Activated B cell treated with CpG ODN at 0.5 μM for 24 hours (primary cell): ENCODE measurements at regions of chr6 and their contacts with region 1.

Region 1: GRCh38 chr6:106181664-106182418 is 95.7 kb downstream of the PRDM1 start:
- DNase-seq: no peak
- ATAC-seq: peak; percentile 41
- H3K4me3 Mint-ChIP-seq: no peak overlapping the region
- H3K27ac Mint-ChIP-seq: peak overlapping the region; percentile 78
- H3K4me1 Mint-ChIP-seq: peaks cover 30% of the 10 kb centered on the region
- H3K27me3 Mint-ChIP-seq: no peaks in the 10 kb centered on the region
- CTCF ChIP-seq: no peak

Region 2: GRCh38 chr6:106097411-106098231 is 84.2 kb before region 1 on chr6:
- CTCF ChIA-PET with region 1: no interaction called
- POLR2A ChIA-PET with region 1: interaction called, 10 read pairs
- intact Hi-C with region 1: no loop called
- DNase-seq: no peak
- ATAC-seq: peak; percentile 74
- H3K4me3 Mint-ChIP-seq: peak overlapping the region; percentile 89
- H3K27ac Mint-ChIP-seq: peak overlapping the region; percentile 94
- H3K4me1 Mint-ChIP-seq: peaks cover 84% of the 10 kb centered on the region
- H3K27me3 Mint-ChIP-seq: no peaks in the 10 kb centered on the region
- CTCF ChIP-seq: no peak

Region 3: GRCh38 chr6:106112433-106112832 is 69.4 kb before region 1 on chr6:
- CTCF ChIA-PET with region 1: no interaction called
- POLR2A ChIA-PET with region 1: no interaction called
- intact Hi-C with region 1: no loop called
- DNase-seq: no peak
- ATAC-seq: no peak
- H3K4me3 Mint-ChIP-seq: no peak overlapping the region
- H3K27ac Mint-ChIP-seq: no peak overlapping the region
- H3K4me1 Mint-ChIP-seq: peaks cover 28% of the 10 kb centered on the region
- H3K27me3 Mint-ChIP-seq: no peaks in the 10 kb centered on the region
- CTCF ChIP-seq: no peak

Region 4: DNA sequence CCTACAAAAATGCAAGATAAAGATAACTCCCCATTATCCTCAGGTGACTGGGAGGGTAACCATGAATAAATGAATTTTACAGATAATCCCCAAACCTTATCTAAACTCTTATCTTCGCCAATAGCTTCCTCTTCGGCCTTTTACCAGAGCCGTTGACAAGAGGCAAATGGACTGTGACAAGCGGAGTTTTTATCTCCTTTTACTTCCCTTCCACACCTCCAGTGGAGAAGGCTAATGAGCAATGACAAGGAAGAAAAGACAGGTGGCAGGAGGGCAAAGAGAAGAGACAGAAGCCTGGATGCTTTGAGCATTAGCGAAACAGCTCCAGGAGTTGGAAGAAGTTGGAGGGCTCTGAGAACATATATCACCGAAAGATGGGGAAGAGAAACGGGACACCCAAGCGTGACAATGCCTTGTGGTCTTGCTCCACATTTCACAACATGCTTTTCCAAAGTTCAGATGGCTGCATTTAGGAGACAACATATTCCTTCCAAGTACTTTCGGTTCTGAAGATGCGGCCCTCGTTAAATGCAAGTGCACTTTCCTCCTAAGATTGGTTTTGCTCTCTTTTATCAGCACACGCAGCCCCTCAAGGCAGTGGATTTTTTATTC is 26.5 kb before region 1 on chr6:
- CTCF ChIA-PET with region 1: no interaction called
- POLR2A ChIA-PET with region 1: no interaction called
- intact Hi-C with region 1: no loop called
- DNase-seq: no peak
- ATAC-seq: no peak
- H3K4me3 Mint-ChIP-seq: no peak overlapping the region
- H3K27ac Mint-ChIP-seq: no peak overlapping the region
- H3K4me1 Mint-ChIP-seq: peaks cover 11% of the 10 kb centered on the region
- H3K27me3 Mint-ChIP-seq: no peaks in the 10 kb centered on the region
- CTCF ChIP-seq: no peak

Region 5: GRCh38 chr6:106194949-106195921 is 13.4 kb after region 1 on chr6:
- CTCF ChIA-PET with region 1: interaction called, 3 read pairs
- POLR2A ChIA-PET with region 1: interaction called, 4 read pairs
- intact Hi-C with region 1: loop called (anchors 1 kb)
- DNase-seq: no peak
- ATAC-seq: peak; percentile 77
- H3K4me3 Mint-ChIP-seq: peak overlapping the region; percentile 9
- H3K27ac Mint-ChIP-seq: peak overlapping the region; percentile 41
- H3K4me1 Mint-ChIP-seq: peaks cover 34% of the 10 kb centered on the region
- H3K27me3 Mint-ChIP-seq: no peaks in the 10 kb centered on the region
- CTCF ChIP-seq: no peak

Region 6: DNA sequence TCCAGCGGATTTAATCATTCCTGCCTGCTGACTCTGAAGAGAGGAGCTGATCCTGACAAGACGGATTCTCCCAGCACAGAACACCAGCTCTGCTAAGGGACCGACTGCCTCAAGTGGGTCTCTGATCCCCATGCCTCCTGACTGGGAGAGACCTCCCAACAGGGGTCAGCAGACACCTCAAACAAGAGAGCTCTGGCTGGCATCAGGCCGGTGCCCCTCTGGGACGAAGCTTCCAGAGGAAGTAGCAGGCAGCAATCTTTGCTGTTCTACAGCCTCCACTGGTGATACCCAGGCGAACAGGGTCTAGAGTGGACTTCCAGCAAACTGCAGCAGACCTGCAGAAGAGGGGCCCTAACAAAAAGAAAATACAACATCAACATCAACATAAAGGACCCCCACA is 81.6 kb after region 1 on chr6:
- CTCF ChIA-PET with region 1: no interaction called
- POLR2A ChIA-PET with region 1: no interaction called
- intact Hi-C with region 1: no loop called
- DNase-seq: no peak
- ATAC-seq: no peak
- H3K4me3 Mint-ChIP-seq: no peak overlapping the region
- H3K27ac Mint-ChIP-seq: no peak overlapping the region
- H3K4me1 Mint-ChIP-seq: peaks cover 8% of the 10 kb centered on the region
- H3K27me3 Mint-ChIP-seq: no peaks in the 10 kb centered on the region
- CTCF ChIP-seq: no peak